ENCODE measurements at regions of chr2 and their contacts with region 1.

Region 1: DNA sequence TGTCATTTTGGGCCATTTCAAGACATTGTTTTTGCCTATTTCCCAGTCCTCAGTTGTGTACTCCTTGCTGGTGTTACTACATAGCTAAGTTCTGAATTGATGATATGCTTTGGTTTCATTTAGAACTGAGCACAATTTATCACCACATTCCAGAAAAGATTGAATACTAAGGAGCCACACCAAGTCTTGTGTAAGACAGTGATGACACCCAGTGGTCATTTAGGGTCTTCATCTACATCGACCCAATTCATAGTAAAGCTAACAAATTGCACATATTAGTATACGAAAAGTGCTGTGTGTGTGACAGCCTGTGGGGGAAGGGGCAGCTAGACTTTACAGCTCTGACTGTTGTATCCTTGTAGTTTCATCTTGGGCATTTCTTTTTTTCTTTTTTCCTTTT is 10.9 kb upstream of the DLX2 start:
- DNase-seq: no peak
- ATAC-seq: no peak
- H3K4me3 ChIP-seq: no peak overlapping the region
- H3K27ac ChIP-seq: no peak overlapping the region
- H3K4me1 ChIP-seq: peaks cover 0 to under 1% (median 0%) of the 10 kb centered on the region in 9 donors
- H3K27me3 ChIP-seq: peaks cover 6 to 91% (median 58%) of the 10 kb centered on the region in 7 donors
- CTCF ChIP-seq: peak in 7 of 9 donors; percentile 32 to 58 (median 37)

Region 2: DNA sequence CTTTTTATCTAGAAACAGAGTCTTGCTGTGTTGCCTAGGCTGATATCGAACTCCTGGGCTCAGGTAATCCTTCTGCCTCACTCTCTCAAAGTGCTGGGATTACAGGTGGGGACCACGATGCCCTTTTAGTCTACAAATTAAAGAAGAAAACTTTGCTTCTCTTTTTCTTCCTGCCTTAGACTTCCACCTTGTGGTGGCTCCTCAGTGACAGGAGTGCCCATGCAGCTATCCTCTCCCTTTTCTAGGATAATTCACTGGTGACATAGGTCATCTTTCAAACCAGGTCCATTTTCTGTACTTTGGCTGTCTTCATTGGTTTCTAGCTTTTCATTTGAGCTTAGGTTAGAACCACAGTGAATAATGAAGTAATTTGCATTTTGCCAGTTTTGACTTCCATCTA is 665.9 kb before region 1 on chr2:
- intact Hi-C with region 1: no loop called
- DNase-seq: no peak
- ATAC-seq: no peak
- H3K4me3 ChIP-seq: no peak overlapping the region
- H3K27ac ChIP-seq: no peak overlapping the region
- H3K4me1 ChIP-seq: no peaks in the 10 kb centered on the region
- H3K27me3 ChIP-seq: no peaks in the 10 kb centered on the region
- CTCF ChIP-seq: no peak

Region 3: GRCh38 chr2:171574149-171574795 is 539.3 kb before region 1 on chr2:
- intact Hi-C with region 1: loop called in 4 of 10 experiments (anchors 5 to 10 kb)
- DNase-seq: peak; percentile 72 to 83
- ATAC-seq: peak; percentile 92 to 98 (median 96)
- H3K4me3 ChIP-seq: peak overlapping the region in 2 of 10 donors; percentile 12 to 16
- H3K27ac ChIP-seq: no peak overlapping the region
- H3K4me1 ChIP-seq: peaks cover 0 to 3% (median 0%) of the 10 kb centered on the region in 9 donors
- H3K27me3 ChIP-seq: peaks cover 0 to 11% (median 0%) of the 10 kb centered on the region in 7 donors
- CTCF ChIP-seq: peak; percentile 89 to 99 (median 98)

Region 4: DNA sequence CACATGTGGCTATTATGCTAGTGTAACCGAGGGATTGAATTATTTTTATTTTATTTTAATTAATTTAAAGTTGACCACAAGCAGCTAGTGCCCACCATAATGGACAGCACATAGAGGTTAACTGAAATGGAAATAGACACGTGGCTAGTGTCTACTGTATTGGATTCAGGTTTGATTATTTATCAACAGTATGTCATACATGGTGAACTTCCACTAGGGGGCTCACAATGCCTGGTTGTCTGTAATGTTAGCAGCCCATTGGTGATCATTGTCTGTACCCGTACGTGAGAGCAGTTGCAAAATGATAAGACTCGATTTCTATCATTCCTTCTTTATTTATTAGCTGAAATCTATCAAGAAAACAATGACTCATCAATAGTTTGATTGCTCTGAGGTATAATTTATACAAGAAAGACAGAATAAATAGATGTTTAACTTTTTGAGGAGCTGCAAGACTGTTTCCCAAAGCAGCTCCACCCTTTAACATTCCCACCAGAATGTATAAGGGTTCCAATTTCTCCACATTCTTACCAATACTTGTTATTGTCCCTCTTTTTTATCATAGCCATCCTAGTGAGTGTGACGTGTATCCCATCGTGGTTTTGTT is 514.8 kb before region 1 on chr2:
- intact Hi-C with region 1: loop called in 6 of 10 experiments (anchors 5 to 10 kb)
- DNase-seq: peak in 1 of 2 donors; percentile 34
- ATAC-seq: peak in 7 of 8 donors; percentile 55 to 84 (median 67)
- H3K4me3 ChIP-seq: no peak overlapping the region
- H3K27ac ChIP-seq: no peak overlapping the region
- H3K4me1 ChIP-seq: peaks cover 0 to 4% (median 0%) of the 10 kb centered on the region in 9 donors
- H3K27me3 ChIP-seq: peaks cover 0 to 33% (median 6%) of the 10 kb centered on the region in 7 donors
- CTCF ChIP-seq: peak; percentile 49 to 81 (median 73)

Region 5: DNA sequence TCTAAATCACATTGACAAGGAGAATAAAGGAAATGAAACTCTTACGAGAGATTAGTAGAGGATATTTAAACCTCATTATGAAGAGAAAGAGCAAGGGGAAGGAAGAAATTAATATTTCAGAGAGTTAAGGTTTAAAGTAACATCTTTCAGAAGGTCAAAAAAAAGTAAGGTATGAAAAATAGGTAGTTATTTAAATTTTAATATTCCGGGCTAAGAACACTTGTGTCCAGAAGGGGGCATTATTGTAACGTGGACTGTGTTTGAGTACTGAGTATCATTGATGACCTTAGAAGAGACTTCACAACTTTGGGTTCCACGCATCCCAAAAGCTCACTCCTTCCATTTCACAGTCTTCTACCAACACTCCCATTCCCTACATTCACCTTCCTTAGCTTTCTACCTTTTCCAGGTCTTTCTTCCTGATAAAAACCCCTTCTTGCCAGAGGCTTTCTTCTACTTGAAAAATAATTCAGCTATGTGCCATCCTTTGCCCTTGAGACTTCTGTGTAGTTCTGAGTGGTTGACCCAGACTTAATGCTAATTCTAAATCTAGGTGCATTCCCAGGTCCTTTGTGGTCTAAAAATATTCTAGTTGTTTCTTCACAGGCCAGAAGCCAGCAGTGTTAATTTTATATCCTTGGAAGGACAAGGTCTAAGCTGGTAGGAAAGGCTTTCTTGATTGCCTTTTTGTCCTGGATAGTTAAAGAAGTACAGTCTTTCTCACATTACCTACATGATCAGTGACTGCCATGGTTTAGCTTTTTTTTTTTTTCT is 409.9 kb before region 1 on chr2:
- intact Hi-C with region 1: loop called in 6 of 10 experiments (anchors 5 to 10 kb)
- DNase-seq: no peak
- ATAC-seq: peak in 7 of 8 donors; percentile 28 to 73 (median 59)
- H3K4me3 ChIP-seq: no peak overlapping the region
- H3K27ac ChIP-seq: peak overlapping the region in 7 of 10 donors; percentile 4 to 68 (median 57)
- H3K4me1 ChIP-seq: peaks cover 4 to 52% (median 24%) of the 10 kb centered on the region in 9 donors
- H3K27me3 ChIP-seq: no peaks in the 10 kb centered on the region
- CTCF ChIP-seq: peak; percentile 19 to 61 (median 51)

Measured in heart right ventricle (tissue), 16 donors.